Common myeloid progenitor, CD34-positive (primary cell): ENCODE measurements at regions of chr14 and their contacts with region 1.

Region 1: DNA sequence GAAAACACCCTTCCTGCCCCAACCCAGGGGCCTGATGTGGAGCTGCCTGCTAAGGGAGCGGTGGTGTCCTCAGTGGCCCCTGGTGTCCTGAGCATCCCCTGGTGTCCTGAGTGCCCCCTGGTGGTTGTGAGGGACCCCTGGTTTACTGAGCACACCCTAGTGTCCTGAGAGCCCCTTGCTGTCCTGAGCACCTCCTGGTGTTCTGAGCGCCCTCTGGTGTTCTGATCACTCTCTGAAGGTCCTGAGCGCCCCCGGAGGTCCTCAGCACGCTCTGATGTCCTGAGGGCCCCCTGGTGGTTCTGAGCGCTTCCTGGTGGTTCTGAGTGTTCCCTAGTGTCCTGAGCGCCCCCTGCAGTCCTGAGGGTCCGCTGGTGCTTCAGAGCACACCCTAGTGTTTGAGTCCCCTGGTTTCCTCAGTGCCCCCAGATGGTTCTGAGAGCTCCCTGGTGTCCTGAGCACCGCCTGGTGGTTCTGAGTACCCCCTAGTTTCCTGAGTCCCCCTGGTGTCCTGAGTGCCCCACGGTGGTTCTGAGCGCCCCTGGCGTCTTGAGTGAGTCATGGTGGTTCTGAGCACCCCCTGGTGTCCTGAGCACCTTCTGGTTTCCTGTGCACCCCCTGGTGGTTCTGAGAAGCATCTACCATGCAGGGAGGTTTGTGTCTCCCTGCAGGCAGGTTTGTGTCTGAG is 1004.2 kb downstream of the TMEM121 start:
- DNase-seq: peak; percentile 59 to 75 (median 75)
- H3K4me3 ChIP-seq: no peak overlapping the region
- H3K27ac ChIP-seq: no peak overlapping the region
- H3K4me1 ChIP-seq: no peaks in the 10 kb centered on the region
- H3K27me3 ChIP-seq: peaks cover 0 to 21% (median 0%) of the 10 kb centered on the region in 5 experiments

Region 2: GRCh38 chr14:106518054-106518943 is 12.3 kb before region 1 on chr14:
- CTCF ChIA-PET with region 1: interaction called, 84 read pairs
- POLR2A ChIA-PET with region 1: no interaction called
- DNase-seq: peak; percentile 76 to 87 (median 86)
- H3K4me3 ChIP-seq: no peak overlapping the region
- H3K27ac ChIP-seq: no peak overlapping the region
- H3K4me1 ChIP-seq: peaks cover 6 to 17% (median 13%) of the 10 kb centered on the region in 4 experiments
- H3K27me3 ChIP-seq: peaks cover 0 to 42% (median 2%) of the 10 kb centered on the region in 5 experiments

Region 3: GRCh38 chr14:106556665-106557289 is 26.2 kb after region 1 on chr14:
- CTCF ChIA-PET with region 1: interaction called, 14 read pairs
- POLR2A ChIA-PET with region 1: no interaction called
- DNase-seq: peak; percentile 51 to 60 (median 59)
- H3K4me3 ChIP-seq: no peak overlapping the region
- H3K27ac ChIP-seq: no peak overlapping the region
- H3K4me1 ChIP-seq: no peaks in the 10 kb centered on the region
- H3K27me3 ChIP-seq: peaks cover 0 to 7% (median 0%) of the 10 kb centered on the region in 5 experiments